OCI-LY7 (cell line): ENCODE measurements at regions of chr4 and their contacts with region 1.

Region 1: DNA sequence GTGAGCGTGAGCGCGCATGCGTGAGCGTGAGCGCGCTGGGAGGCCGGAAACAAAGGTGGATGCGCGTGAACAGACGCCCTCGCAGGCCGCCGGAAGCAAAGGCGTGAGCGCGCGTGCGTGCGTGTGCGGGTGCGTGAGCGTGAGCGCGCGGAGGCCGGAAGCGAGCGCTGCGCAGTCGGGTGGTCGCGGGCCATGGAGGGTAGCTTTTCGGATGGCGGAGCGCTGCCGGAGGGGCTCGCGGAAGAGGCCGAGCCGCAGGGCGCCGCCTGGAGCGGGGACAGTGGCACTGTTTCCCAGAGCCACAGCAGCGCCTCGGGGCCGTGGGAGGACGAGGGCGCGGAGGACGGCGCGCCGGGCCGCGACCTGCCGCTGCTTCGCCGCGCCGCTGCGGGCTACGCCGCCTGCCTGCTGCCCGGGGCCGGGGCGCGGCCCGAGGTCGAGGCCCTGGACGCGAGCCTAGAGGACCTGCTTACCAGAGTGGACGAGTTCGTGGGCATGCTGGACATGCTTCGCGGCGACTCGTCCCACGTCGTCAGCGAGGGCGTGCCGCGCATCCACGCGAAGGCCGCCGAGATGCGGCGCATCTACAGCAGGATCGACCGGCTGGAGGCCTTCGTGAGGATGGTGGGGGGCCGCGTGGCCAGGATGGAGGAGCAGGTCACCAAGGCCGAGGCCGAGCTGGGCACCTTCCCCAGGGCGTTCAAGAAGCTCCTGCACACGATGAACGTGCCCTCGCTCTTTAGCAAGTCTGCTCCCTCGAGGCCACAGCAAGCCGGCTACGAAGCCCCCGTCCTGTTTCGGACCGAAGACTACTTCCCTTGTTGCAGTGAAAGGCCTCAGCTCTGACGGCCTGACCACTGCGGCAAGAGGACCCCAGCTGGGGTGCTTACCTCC is at the start of gene BLOC1S4:
- DNase-seq: peak; percentile 97
- H3K4me3 ChIP-seq: peak within 1 kb of the TSS; percentile 77
- H3K27ac ChIP-seq: peak within 1 kb of the TSS; percentile 38
- H3K4me1 ChIP-seq: peaks cover 21% of the 10 kb centered on the region
- CTCF ChIP-seq: no peak
- total RNA-seq, gene BLOC1S4: 26.5 and 36.1 TPM in 2 replicates

Region 2: DNA sequence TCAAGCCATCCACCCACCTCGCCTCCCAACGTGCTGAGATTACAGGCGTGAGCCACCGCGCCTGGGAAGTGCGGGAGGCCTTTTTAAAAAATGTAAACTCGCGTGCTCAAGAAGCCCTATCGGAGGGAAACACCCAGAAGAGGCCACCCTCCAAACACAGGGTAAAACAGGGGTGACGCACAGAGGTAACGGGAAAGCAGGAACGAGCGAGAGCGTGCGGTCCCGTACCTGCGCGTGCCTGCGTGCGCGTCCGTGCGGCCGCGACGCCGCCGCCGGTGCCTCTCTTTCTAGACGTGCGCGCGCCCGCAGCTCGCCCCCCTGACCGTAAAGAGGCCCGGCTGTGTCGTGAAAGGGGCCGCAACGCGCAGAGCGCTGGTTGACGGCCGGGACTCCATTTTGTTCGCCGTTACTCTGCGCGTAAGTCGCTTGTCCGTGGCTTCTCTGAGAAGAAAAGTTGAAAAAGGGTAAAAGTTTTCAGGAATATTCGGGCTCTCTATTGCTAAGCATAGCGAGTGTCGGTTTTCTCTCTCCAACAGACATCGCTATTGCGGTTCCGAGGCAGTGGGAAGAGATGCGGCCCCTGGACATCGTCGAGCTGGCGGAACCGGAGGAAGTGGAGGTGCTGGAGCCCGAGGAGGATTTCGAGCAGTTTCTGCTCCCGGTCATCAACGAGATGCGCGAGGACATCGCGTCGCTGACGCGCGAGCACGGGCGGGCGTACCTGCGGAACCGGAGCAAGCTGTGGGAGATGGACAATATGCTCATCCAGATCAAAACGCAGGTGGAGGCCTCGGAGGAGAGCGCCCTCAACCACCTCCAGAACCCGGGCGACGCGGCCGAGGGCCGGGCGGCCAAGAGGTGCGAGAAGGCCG is 75.7 kb before region 1 on chr4 and contains the start of gene MRFAP1:
- CTCF ChIA-PET with region 1: no interaction called
- POLR2A ChIA-PET with region 1: interaction called, 12 read pairs
- intact Hi-C with region 1: loop called (anchors 2 kb)
- DNase-seq: peak; percentile 96
- H3K4me3 ChIP-seq: peak within 1 kb of the TSS; percentile 87
- H3K27ac ChIP-seq: peak within 1 kb of the TSS; percentile 83
- H3K4me1 ChIP-seq: peaks cover 19% of the 10 kb centered on the region
- CTCF ChIP-seq: no peak
- total RNA-seq, gene MRFAP1: 90.8 and 142 TPM in 2 replicates

Region 3: DNA sequence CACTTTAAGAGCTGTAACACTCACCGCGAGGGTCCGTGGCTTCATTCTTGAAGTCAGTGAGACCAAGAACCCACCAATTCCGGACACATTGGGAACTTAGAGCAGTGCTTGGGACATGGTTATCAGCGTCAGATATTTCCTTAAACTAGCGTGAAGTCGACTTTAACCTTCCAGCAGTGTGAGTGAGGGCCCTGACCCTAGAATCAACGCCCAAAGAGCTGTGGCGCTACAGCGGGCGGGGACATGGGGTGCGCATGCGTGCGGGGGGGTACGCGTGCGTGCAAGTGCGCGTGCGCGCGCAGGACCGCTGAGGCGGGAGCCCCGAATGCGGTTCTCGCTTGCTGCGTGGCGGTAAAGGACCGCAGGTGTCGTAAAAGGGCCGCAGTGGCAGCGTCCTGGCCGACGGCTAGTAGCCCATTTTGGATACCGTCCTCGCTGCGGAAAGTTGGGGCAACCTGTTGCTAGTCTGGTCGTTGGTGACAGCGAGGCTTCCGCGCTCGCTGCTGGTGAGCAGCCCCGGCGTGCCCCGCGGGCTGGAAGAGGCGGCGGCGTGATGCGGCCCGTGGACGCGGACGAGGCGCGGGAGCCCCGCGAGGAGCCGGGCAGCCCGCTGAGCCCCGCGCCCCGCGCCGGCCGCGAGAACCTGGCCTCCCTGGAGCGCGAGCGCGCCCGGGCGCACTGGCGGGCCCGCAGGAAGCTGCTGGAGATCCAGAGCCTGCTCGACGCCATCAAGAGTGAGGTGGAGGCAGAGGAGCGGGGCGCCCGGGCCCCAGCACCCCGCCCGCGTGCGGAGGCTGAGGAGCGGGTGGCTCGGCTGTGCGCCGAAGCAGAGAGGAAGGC is 42.4 kb before region 1 on chr4:
- CTCF ChIA-PET with region 1: interaction called, 3 read pairs
- POLR2A ChIA-PET with region 1: interaction called, 7 read pairs
- intact Hi-C with region 1: loop called (anchors 2 kb)
- DNase-seq: peak; percentile 93
- H3K4me3 ChIP-seq: peak overlapping the region; percentile 78
- H3K27ac ChIP-seq: peak overlapping the region; percentile 85
- H3K4me1 ChIP-seq: peaks cover 24% of the 10 kb centered on the region
- CTCF ChIP-seq: no peak

Region 4: GRCh38 chr4:6783053-6783981 is 67.1 kb after region 1 on chr4:
- CTCF ChIA-PET with region 1: no interaction called
- POLR2A ChIA-PET with region 1: no interaction called
- intact Hi-C with region 1: loop called (anchors 2 kb)
- DNase-seq: peak; percentile 87
- H3K4me3 ChIP-seq: peak overlapping the region; percentile 95
- H3K27ac ChIP-seq: peak overlapping the region; percentile 87
- H3K4me1 ChIP-seq: peaks cover 18% of the 10 kb centered on the region
- CTCF ChIP-seq: peak; percentile 51; the same call in 1 of the 2 replicates

Region 5: DNA sequence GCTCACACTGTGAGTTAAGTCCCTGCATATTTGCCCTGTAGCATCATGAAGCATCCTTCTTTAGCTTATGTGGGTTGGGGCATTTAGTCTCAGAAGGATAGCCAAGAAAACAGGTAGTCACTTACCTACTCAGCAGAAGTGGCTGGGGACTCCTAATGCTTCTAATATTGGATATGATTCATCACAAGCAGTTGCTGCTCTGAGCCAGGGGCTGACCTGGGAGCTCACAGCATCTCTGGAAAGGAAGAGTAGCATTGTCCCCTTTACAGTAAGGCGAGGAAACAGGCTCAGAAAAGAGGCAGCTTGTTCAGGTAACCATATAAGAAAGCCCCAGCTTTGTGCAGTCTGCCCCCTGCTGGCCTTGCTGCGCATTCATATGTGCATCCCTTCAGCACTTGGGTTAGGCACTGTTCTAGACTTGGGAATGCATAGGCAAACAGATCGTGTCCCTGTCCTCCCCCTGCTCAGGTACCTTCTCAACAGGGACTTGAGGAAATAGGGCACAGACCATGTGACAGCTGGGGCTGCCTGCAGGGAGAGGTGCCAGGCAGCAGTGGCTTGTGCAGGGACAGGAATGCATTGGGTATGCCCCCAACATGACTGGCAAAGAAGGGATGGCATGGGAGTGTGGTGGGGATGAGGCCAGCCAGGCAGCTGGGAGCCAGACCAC is 157.7 kb after region 1 on chr4:
- CTCF ChIA-PET with region 1: interaction called, 5 read pairs
- POLR2A ChIA-PET with region 1: interaction called, 10 read pairs
- intact Hi-C with region 1: loop called (anchors 1 kb)
- DNase-seq: peak; percentile 79
- H3K4me3 ChIP-seq: no peak overlapping the region
- H3K27ac ChIP-seq: no peak overlapping the region
- H3K4me1 ChIP-seq: no peaks in the 10 kb centered on the region
- CTCF ChIP-seq: peak; percentile 93

Region 6: DNA sequence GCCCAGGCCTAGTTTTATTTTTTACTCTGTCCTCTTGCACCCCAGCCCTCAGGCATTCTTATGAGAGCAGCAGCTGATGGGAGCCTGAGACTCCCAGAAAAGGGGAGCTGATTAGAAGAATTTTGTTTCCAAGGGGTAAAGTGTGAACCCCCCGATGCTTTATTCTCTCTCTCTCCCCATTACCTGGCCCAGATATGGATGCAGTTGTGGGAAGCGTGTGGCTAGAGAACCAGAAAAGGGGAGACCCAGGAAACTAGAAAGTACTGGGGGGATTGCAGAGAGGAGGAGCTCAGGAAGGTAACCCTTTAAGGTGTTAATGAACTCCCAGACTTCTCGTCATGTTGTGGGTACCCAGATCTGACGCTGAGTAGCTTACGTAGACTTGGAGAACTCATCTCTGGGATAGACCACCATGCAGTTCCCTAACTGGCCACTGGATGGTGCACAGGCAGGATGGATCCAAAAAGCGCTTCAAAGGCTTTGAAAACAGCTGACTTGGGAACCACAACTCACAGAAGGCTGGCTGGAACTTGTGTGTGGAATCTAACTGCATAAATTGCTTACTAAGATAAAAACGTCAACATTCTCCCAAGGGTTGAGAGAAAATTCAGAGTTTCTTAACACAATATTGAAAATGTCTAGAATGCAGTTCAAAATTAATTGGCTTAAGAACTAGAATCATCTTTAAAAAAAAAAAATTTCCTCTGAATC is 258.0 kb after region 1 on chr4:
- CTCF ChIA-PET with region 1: interaction called, 4 read pairs
- POLR2A ChIA-PET with region 1: no interaction called
- intact Hi-C with region 1: loop called (anchors 5 kb)
- DNase-seq: peak; percentile 83
- H3K4me3 ChIP-seq: no peak overlapping the region
- H3K27ac ChIP-seq: no peak overlapping the region
- H3K4me1 ChIP-seq: peaks cover 38% of the 10 kb centered on the region
- CTCF ChIP-seq: peak; percentile 93

Region 7: DNA sequence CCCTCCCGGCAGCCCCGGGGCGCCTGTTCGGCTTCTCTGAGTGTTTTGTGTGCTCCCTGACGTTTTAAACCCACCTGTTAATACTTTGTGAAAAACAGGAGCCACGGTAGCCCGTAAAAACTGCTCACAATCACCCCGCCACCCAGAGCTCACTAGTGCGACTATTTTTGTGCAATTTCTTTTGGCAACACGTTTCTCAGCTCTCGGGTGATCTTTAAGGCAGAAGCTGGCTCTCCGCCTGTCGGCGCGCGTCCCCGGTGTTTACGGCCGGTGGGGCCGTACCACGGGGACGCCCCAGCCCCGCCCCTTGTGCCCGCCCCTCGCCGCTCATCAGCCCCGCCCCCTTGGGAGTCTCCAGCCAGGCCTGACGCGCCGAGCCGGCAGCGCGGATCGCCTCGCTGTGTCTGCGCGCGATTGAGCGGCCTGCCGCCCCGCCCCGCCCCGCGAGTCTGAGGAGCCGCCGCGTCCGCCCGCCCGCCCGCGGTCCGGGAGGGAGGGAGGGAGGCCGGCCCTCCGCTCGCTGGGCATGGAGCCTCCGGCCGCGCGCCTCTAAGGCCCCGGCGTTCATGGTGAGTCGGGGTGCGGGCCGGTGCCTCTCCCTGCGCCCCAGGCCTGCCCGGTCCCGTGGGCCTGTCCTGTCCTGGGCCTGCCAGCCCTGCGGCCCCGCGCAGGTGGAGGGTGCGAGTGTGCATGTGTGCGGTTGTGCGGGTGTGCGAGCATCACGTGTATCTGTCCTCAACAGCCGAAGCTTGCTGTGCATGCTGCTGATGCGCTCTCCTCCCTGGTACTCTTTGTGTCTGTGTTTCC is 270.7 kb after region 1 on chr4:
- CTCF ChIA-PET with region 1: no interaction called
- POLR2A ChIA-PET with region 1: no interaction called
- intact Hi-C with region 1: loop called (anchors 2 kb)
- DNase-seq: peak; percentile 96
- H3K4me3 ChIP-seq: peak overlapping the region; percentile 78
- H3K27ac ChIP-seq: peak overlapping the region; percentile 62
- H3K4me1 ChIP-seq: peaks cover 38% of the 10 kb centered on the region
- CTCF ChIP-seq: no peak; the same call in 1 of the 2 replicates